Dendritic cell treated with granulocyte-macrophage colony-stimulating factor and Interleukin-4, amounts not matched to agents 40 ng/mL and 50 ng/mL, for 4 days (primary cell): ENCODE measurements at regions of chr3 and their contacts with region 1.

Region 1: DNA sequence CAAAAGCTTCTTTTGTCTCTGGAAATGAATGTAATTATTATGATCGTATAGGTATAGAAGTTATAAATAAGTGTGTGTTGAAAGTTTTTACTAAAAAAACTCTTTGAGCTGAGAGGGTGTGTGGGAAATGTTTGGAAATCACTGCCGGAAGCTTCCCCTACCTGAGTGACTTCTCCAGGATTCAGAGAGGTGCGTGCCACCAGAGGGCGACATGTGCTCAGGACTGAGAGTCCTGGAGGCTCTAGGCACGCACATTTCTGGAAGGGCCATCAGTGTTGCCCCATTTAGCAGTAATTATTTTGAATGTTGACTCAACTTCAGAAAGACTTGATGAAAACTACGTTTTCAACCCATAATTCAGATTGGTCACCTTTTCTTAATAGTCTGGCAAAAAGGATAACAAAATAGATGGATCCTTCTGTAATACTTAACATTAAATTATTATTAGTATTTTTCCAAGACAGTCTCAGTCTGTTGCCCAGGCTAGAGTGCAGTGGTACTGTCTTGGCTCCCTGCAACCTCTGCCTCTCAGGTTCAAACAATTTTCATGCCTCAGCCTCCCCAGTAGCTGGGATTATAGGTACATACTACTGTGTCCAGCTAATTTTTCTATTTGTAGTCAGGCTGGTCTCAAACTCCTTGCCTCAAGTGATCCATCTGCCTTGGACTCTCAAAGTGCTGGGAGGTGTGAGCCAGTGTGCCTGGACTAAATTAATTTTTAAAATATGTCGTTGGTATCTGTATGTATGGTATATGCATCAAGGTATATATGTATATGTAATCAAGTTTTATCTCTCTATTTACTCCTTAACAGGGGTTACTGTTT is 34.5 kb downstream of the GPR171 start:
- H3K4me3 Mint-ChIP-seq: no peak overlapping the region
- H3K27ac Mint-ChIP-seq: peak overlapping the region; percentile 94
- H3K4me1 Mint-ChIP-seq: peaks cover 47% of the 10 kb centered on the region
- H3K27me3 Mint-ChIP-seq: no peaks in the 10 kb centered on the region

Region 2: DNA sequence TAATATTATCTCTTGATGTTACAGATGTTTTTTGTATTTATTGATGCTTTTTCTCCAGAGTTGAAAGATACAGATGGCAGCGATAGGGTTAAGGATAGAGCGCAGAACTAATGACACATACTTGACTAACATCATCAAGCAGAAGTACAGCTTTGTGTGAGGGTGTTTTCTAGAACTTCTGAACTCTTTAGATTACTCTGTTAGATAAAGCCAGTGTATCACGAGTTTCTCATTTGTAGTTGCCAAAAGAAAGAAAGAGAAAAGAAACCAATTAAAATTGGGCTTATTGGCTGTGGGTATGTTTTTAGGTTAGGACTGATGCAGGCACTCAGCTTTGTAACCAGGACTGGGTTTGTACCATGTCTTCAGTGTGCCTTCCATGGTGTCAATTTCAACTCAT is 41.2 kb after region 1 on chr3:
- intact Hi-C with region 1: loop called (anchors 5 kb)
- H3K4me3 Mint-ChIP-seq: no peak overlapping the region
- H3K27ac Mint-ChIP-seq: peak overlapping the region; percentile 72
- H3K4me1 Mint-ChIP-seq: peaks cover 67% of the 10 kb centered on the region
- H3K27me3 Mint-ChIP-seq: no peaks in the 10 kb centered on the region

Region 3: DNA sequence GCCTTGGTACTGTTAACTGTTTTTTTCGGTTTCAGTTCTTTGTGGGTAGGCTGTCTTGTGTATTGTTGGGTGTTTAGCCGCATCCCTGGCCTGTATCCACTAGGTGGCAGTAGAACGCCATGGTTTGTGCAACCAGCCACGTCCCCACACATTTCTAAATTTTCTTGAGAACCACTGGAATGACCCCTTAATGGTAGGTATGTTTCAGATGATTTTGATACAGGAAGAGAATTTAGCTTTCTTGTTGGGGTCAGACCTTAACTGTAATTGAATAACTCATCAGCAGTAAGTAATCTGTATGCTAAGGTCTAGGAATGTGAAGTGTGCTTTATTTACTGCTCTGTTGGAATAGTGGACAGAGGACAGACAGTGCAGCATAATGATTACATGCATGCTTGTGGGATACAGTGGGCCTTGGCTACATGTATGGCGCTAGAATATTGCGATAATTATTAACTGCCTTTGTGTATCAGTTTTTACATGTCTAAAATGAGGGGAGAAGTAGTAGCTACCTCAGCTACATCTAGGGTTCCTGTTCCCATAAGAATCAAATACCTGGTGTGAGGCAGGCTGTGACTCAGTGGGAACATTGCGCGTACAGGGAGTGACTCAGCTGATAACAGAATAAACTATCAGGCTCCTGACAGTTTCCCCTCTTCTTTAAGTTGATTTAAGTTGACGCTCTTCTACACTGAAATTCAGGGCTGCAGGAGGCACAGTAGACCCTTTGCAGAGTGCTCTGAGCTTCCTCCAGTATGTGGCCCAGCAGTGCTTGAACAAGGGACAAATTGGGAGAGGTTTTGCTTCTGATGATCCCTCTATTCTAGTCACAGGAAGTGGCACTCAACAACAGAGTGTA is 59.6 kb after region 1 on chr3:
- intact Hi-C with region 1: loop called (anchors 1 kb)
- H3K4me3 Mint-ChIP-seq: peak overlapping the region; percentile 13
- H3K27ac Mint-ChIP-seq: peak overlapping the region; percentile 80
- H3K4me1 Mint-ChIP-seq: peaks cover 75% of the 10 kb centered on the region
- H3K27me3 Mint-ChIP-seq: no peaks in the 10 kb centered on the region

Region 4: DNA sequence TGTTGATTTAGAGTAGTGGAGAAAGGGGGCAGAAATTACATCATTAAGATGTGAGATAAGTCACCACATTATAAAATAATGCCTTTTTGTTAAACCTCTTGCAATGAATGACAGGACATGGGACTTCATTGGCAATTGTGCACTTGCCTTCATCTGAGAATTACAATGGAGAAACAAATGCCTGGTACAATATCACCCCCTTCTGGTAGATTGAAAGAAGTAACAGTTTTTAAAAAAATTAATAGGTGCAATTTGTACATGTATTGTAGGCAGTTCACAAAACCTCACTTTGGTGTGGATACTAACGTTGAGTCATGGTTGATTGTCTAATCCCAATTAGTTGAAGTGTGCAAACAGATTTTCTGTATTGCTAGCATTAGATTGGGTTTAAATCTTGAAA is 114.4 kb after region 1 on chr3:
- intact Hi-C with region 1: loop called (anchors 1 kb)
- H3K4me3 Mint-ChIP-seq: no peak overlapping the region
- H3K27ac Mint-ChIP-seq: no peak overlapping the region
- H3K4me1 Mint-ChIP-seq: peaks cover 65% of the 10 kb centered on the region
- H3K27me3 Mint-ChIP-seq: no peaks in the 10 kb centered on the region

Region 5: DNA sequence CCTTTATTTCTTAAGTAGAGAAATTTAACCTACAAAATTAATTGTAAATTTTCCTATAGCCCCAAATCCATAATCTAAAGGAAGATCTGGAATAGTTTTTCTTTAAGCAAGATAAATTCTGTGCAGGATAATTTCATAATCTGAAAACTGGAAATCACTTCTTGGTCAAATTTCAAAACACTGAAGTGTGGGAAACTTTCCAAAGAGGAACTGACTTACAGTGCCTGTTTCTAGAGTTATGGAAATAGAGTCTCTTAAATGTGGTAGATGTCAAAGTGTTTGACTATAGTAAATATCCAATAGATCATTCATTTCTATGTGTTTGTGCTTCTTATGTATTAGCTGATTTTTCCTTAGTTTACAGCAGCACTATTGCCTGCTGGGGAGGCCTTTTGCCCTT is 162.4 kb after region 1 on chr3:
- intact Hi-C with region 1: no loop called
- H3K4me3 Mint-ChIP-seq: no peak overlapping the region
- H3K27ac Mint-ChIP-seq: peak overlapping the region; percentile 39
- H3K4me1 Mint-ChIP-seq: peaks cover 56% of the 10 kb centered on the region
- H3K27me3 Mint-ChIP-seq: no peaks in the 10 kb centered on the region

Region 6: GRCh38 chr3:151439652-151440129 is 271.2 kb after region 1 on chr3:
- intact Hi-C with region 1: loop called (anchors 10 kb)
- H3K4me3 Mint-ChIP-seq: no peak overlapping the region
- H3K27ac Mint-ChIP-seq: no peak overlapping the region
- H3K4me1 Mint-ChIP-seq: no peaks in the 10 kb centered on the region
- H3K27me3 Mint-ChIP-seq: no peaks in the 10 kb centered on the region

Region 7: GRCh38 chr3:151838583-151839312 is 670.3 kb after region 1 on chr3:
- intact Hi-C with region 1: loop called (anchors 5 kb)
- H3K4me3 Mint-ChIP-seq: no peak overlapping the region
- H3K27ac Mint-ChIP-seq: no peak overlapping the region
- H3K4me1 Mint-ChIP-seq: peaks cover 18% of the 10 kb centered on the region
- H3K27me3 Mint-ChIP-seq: no peaks in the 10 kb centered on the region